ENCODE measurements at regions of chr19 and their contacts with region 1.

Region 1: DNA sequence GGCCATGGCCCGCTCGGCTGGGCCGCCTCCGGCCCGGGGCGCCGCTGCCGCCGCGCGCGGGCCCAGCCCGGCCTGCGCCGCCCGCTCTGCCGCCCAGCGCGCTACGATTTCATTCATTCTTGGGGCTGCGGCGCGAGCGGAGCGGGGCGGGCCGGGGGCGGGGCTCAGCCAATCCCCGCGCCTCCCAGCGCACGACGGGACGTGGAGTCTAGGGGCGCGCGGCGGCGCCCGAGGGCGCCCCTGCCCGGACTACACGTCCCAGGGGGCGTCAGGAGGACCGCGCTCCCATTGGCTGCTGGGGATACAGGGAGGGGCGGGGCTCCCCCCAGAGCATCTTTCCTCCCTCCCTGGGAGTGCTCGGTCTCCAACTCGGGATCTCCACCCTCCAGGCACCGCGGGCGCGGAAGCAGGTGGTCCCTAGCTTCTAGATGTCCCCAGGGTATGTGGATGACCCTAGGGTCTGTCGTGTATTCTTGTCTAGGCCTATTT is 5.6 kb upstream of the DPF1 start:
- DNase-seq: peak; percentile 85 to 99 (median 96)

Region 2: DNA sequence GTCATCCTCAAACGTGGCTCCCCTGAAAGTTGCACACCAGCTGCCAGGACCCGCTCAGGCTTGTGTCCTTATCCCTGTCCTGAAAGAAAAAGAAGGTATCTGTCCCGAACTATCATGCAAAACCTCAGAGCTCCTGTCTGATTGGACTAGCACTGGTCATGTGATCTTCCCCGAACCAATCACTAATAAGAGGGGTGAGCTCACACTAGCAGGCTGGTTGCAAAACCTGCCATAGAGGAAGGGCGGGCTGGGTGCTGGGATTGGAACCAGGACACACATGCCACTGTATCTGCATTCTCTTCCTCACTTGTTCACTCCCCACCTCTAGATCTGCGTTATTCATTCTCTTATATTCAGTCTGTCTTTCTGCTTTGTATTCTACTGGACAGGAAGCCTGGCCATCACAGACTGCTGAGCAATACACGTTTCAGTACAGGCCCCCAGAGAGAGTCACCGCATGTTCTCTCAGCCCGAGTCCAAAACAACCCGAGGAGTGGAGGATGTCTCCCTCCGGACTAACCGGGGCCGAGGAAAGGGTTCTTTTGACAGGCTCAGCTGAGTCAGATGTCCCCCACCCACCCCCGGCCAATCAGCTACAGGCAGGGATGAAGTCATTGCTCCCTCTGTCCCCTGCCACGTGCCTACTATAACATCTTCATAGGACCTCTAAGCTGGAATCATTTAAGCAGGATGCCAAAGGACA is 225.0 kb before region 1 on chr19:
- intact Hi-C with region 1: no loop called
- DNase-seq: peak; percentile 77 to 98 (median 88)

Region 3: GRCh38 chr19:38142176-38143035 is 87.2 kb before region 1 on chr19:
- intact Hi-C with region 1: loop called (anchors 5 kb)
- DNase-seq: peak; percentile 57 to 97 (median 83)

Region 4: GRCh38 chr19:38213911-38214625 is 15.6 kb before region 1 on chr19:
- intact Hi-C with region 1: no loop called
- DNase-seq: peak in 8 of 10 donors; percentile 39 to 94 (median 70)